AG04449 (cell line): ENCODE measurements at regions of chr9 and their contacts with region 1.

Region 1: GRCh38 chr9:132169672-132170392 is 8.0 kb downstream of the NTNG2 start:
- DNase-seq: no peak
- H3K4me3 ChIP-seq: no peak overlapping the region
- CTCF ChIP-seq: peak; percentile 83

Region 2: DNA sequence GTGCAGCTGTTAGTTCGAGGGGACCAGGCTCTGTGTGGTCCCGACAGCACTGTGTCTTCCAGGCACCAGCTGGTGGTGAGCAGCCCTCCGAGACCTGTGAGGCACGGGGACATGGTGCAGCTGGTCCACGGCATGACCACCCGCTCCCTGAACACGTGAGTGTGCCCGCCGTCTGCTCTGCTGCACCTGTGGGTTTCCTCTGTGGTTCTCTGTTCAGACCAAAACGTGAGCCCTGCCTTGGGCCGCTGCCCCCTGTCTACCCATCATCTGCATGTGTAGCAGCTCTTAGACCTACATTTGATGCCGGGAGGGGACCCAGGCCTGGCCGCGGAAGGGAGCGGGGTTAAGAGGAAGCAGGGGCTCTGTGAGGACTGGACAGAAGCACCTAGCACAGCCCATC is 656.7 kb before region 1 on chr9:
- CTCF ChIA-PET with region 1: no interaction called
- POLR2A ChIA-PET with region 1: no interaction called
- DNase-seq: no peak
- H3K4me3 ChIP-seq: no peak overlapping the region
- CTCF ChIP-seq: no peak

Region 3: GRCh38 chr9:131762356-131762932 is 407.4 kb before region 1 on chr9:
- CTCF ChIA-PET with region 1: interaction called, 16 read pairs
- POLR2A ChIA-PET with region 1: no interaction called
- DNase-seq: no peak
- H3K4me3 ChIP-seq: no peak overlapping the region
- CTCF ChIP-seq: peak; percentile 90

Region 4: GRCh38 chr9:132182314-132183091 is 12.7 kb after region 1 on chr9:
- CTCF ChIA-PET with region 1: interaction called, 131 read pairs
- POLR2A ChIA-PET with region 1: no interaction called
- DNase-seq: no peak
- H3K4me3 ChIP-seq: no peak overlapping the region
- CTCF ChIP-seq: peak; percentile 15

Region 5: GRCh38 chr9:132201139-132201538 is 31.3 kb after region 1 on chr9:
- CTCF ChIA-PET with region 1: interaction called, 12 read pairs
- POLR2A ChIA-PET with region 1: no interaction called
- DNase-seq: no peak
- H3K4me3 ChIP-seq: no peak overlapping the region
- CTCF ChIP-seq: no peak